ENCODE measurements at regions of chr21 and their contacts with region 1.

Region 1: GRCh38 chr21:42574234-42575027 is 60.8 kb downstream of the SLC37A1 start:
- DNase-seq: peak; percentile 33
- ATAC-seq: peak; percentile 95
- H3K4me3 ChIP-seq: no peak overlapping the region
- H3K27ac ChIP-seq: no peak overlapping the region
- H3K4me1 ChIP-seq: no peaks in the 10 kb centered on the region
- H3K27me3 ChIP-seq: peaks cover 2 to 8% of the 10 kb centered on the region in 2 experiments; a peak in 3 of 5 replicates
- CTCF ChIP-seq: peak; percentile 71
- EP300 ChIP-seq: no peak
- POLR2A ChIP-seq: no peak
- RAD21 ChIP-seq: peak; percentile 46; the same call in 1 of the 2 replicates

Region 2: DNA sequence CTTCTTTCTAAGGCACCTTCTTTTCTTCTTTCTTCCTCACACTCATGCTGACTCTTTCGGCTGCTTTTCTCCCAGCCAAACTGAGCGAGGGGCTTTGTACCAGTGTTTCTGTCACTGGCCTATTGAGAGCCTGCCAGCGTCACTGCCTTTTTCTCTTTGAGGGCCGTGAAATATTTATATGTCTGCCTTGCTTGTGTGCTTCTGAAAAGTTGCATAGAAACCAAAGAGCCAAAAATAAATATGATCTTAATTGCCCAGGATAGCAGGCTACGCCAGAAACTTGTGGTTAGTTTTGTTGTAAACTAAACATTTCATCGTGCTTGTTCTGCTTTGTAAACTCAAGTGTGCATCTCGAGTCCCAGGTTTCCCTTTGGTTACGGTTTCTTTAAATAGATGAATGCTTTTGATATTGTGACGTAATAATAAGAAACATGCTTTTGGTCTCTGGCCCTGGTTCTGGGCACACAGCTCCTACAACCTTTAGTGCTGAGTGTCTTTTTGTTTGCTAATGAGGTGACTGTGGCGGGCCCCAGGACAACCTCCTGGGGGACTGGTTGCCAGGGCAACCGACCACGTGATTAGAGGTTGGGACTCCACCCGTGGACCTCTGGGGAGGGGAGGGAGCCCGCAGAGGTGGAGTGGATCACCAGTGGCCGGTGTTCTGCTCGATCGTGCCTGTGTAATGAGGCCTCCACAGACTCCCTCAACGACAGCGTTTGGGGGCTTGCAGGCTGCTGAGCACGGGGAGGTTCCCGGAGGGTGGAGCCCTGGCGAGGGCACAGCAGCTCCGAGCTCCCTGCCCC is 49.9 kb before region 1 on chr21:
- CTCF ChIA-PET with region 1: no interaction called
- POLR2A ChIA-PET with region 1: no interaction called
- in situ Hi-C with region 1: no loop called
- intact Hi-C with region 1: loop called (anchors 5 kb)
- DNase-seq: peak; percentile 9
- ATAC-seq: no peak
- H3K4me3 ChIP-seq: no peak overlapping the region
- H3K27ac ChIP-seq: no peak overlapping the region
- H3K4me1 ChIP-seq: peaks cover 40% of the 10 kb centered on the region
- H3K27me3 ChIP-seq: 0 out of 5 replicates have a peak, but pooled peaks cover 0 to 4% of the 10 kb centered on the region in 2 experiments
- CTCF ChIP-seq: no peak
- EP300 ChIP-seq: no peak
- POLR2A ChIP-seq: no peak
- RAD21 ChIP-seq: no peak

Region 3: DNA sequence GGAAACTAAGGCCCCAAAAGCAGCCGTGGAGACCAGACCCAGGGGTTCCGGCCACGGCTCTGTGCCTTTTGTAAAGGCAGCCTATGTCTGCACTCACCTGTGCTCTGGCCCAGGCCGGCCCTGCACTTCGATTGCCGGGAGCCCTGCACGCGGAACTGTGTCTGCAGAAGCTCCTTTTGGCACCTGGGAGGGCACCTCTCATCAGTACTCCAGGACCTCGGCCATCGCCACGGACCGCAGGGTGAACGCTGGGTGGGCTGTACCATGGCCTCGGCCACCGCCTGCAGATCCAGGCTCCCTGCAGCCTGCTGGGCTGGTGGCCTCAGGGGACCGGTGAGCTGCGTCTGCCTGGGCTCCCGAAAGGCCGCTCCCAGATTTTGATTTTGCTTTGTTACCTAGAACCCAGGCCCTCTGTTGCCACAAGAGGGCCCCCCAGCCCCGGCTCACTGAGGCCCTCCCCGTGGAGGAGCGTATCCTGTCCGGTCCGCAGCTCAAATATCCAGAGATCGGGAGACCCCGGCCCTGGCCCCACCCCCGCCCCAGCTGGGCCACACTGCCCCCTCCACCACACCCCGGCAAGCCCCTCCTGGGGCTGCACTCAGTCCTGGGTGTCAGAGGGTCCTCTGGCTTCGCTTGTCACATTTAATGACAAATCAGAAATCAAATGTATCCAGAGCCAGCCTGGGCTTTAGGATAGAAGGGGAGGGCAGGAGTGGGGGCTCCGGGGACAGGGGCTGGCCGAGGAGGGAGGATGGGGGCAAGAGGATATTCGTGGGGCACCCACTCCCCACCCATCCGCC is 18.8 kb after region 1 on chr21:
- CTCF ChIA-PET with region 1: no interaction called
- POLR2A ChIA-PET with region 1: no interaction called
- in situ Hi-C with region 1: no loop called
- intact Hi-C with region 1: no loop called
- DNase-seq: peak; percentile 48
- ATAC-seq: peak; percentile 98
- H3K4me3 ChIP-seq: peak overlapping the region; percentile 35 to 66 (median 43); a peak in 5 of 6 replicates
- H3K27ac ChIP-seq: no peak overlapping the region
- H3K4me1 ChIP-seq: peaks cover 15% of the 10 kb centered on the region
- H3K27me3 ChIP-seq: peaks cover 0 to 43% of the 10 kb centered on the region in 2 experiments; a peak in 4 of 5 replicates
- CTCF ChIP-seq: peak; percentile 87
- EP300 ChIP-seq: no peak
- POLR2A ChIP-seq: no peak
- RAD21 ChIP-seq: peak; percentile 79; the same call in 1 of the 2 replicates

Measured in HepG2 (cell line).